Ascending aorta (tissue), 2 donors: ENCODE measurements at regions of chrX and their contacts with region 1.

Region 1: DNA sequence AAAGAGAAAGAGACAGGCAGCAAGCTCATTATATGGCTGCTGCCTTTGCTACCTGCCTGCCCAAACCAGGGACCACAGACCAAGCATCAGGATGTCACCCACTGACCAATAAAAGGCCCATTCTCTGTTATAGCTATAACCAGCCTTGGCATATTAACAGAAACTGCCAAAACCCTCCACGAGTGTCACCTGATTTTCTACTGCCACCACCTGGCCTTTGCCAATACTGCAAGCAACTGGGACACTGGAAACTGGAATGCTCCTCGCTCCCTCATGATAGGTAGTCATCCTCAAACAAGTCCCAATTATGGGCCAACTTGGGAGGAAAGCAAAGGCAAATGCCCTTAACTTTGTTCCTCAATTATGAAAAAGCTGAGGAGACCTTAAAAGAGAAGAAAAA is 76.0 kb downstream of the SPIN4 start:
- DNase-seq: peak in 1 of 2 donors; percentile 66
- H3K4me3 ChIP-seq: no peak overlapping the region
- H3K27ac ChIP-seq: no peak overlapping the region
- H3K4me1 ChIP-seq: no peaks in the 10 kb centered on the region
- H3K27me3 ChIP-seq: no peaks in the 10 kb centered on the region
- CTCF ChIP-seq: peak; percentile 22 to 59 (median 56)

Region 2: DNA sequence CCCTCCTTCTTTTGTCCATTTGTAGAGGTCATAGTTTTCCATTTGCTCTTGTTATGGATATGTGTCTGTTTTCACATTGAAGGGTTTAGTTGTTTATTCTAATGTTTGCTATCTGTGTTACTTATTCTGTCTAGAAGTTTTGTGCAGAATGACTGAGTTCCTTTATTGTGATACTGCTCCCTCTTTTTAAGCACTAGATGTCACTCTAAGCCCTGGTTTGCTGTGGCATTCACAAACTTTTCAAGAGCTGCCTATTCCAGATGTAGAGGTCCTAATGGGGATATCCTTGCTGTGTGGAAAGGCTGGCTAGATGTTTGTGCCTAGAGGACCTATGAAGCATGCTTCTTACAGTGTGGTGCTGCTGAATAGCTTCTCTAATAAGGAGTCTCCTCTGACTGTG is 262.6 kb before region 1 on chrX:
- intact Hi-C with region 1: loop called (anchors 5 kb)
- DNase-seq: no peak
- H3K4me3 ChIP-seq: no peak overlapping the region
- H3K27ac ChIP-seq: no peak overlapping the region
- H3K4me1 ChIP-seq: no peaks in the 10 kb centered on the region
- H3K27me3 ChIP-seq: no peaks in the 10 kb centered on the region
- CTCF ChIP-seq: peak in 1 of 3 experiments; percentile 39

Region 3: GRCh38 chrX:64230123-64230970 is 955.2 kb after region 1 on chrX and contains the start of gene ASB12:
- intact Hi-C with region 1: no loop called
- DNase-seq: no peak
- H3K4me3 ChIP-seq: no peak within 1 kb of the TSS
- H3K27ac ChIP-seq: no peak within 1 kb of the TSS
- H3K4me1 ChIP-seq: no peaks in the 10 kb centered on the region
- H3K27me3 ChIP-seq: no peaks in the 10 kb centered on the region
- CTCF ChIP-seq: no peak
- total RNA-seq, gene ASB12: not detected